PC-9 (cell line): ENCODE measurements at regions of chr12 and their contacts with region 1.

Region 1: DNA sequence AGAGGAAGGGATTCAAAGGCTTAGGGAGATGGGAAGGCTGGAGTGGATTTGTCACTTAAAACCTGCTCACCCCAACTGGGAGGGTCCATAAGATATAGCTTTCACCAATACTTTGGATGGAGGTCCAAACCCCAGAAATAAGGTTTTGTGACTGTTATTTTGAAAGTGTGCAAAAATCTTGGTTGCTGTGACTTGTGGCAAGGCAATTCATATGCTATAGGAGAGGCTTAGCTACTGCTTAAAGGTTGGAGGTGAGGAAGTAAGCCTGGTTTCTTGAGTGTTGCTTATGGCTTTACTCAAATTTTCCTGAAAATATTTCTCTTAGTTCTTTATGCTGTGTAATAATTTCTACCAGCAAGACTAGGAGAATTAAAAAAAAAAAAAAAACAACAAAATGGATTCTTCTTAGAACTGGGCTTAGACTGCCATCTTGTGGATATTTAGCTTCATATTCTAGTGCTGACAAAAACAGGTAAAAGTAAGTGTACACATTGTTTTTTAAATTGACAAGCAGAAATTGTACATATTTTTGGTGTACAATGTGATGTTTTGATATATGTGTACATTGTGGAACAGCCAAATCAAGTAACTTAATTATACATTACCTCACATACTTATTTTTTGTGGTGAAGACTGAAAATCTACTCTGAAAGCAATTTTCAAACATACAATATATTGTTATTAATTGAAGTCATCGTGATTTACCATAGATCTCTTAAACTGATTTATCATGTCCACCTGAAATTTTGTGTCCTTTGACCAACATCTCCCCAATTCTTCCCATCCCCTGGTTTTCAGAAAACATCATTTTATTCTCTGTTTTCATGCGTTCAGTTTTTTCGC is 23.0 kb downstream of the PDE6H start:
- DNase-seq: peak in 1 of 2 experiments; percentile 68
- H3K4me3 ChIP-seq: no peak overlapping the region
- H3K27ac ChIP-seq: no peak overlapping the region
- H3K4me1 ChIP-seq: peaks cover 17% of the 10 kb centered on the region
- H3K27me3 ChIP-seq: no peaks in the 10 kb centered on the region
- CTCF ChIP-seq: peak; percentile 85

Region 2: DNA sequence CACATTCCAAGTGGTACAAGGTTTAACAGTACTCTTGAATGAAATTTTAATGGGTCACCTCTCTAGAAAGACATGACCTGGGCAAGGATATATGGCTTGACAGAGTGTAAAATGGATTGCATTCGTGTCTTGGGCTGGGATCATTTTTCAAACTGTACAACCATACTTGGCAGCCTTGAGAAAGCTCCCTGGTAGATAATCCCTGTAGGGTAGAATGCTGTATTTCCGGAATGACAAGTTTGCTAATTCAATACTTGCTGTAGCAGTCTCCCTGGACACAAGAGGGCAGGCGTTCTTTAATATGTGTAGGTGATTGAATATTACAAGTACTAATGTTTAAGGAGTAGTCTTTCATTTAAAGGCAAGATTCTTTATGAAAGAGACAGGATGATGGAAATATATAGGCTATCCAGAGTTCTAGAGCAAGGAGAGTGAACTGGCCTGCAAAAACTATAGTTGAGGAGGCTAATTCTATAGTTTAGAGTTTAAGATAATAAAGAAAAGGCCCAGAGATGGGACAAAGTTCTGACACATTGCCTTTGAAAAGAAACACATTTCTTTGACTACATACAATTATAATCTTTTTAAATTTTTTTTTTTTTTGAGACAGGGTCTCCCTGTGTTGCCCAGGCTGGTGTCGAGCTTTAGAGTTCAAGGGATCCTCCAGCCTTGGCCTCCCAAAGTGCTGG is 481.5 kb before region 1 on chr12:
- CTCF ChIA-PET with region 1: no interaction called
- POLR2A ChIA-PET with region 1: interaction called, 5 read pairs
- intact Hi-C with region 1: loop called (anchors 10 kb)
- DNase-seq: peak; percentile 66 to 93
- H3K4me3 ChIP-seq: no peak overlapping the region
- H3K27ac ChIP-seq: no peak overlapping the region
- H3K4me1 ChIP-seq: peaks cover 18% of the 10 kb centered on the region
- H3K27me3 ChIP-seq: no peaks in the 10 kb centered on the region
- CTCF ChIP-seq: peak; percentile 79

Region 3: DNA sequence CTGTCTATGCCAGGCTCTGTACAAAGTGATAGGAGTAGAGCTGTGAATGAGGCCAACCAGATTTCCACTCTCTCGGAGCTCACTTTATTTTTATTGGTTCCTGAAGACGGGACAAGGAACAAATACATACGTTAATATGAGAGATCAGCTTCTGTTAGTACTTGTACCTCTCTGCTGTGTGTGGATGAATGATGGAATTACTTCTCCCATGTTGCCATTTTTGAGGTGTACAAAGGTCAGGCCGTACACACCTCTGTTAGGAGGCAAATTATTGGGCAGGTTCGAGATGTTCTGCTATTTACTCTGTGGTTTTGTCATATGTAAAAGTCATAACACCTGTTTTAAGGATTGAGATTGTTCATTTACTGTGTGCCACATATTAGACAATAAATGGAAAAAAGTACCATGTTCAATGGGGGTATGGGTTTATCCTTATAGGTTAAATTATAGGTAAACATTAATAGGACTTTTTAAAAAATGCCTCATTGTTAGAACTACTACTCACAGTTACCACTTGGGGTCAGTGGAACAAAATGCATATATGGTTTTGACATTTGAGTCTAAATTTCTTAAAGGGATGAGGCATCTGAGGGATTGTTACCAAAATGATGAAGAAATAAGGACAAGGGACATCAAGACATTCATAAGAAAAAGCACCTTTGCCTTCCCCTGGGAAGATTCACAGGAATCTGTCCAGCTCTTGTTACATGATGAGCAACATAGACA is 219.4 kb before region 1 on chr12:
- CTCF ChIA-PET with region 1: interaction called, 3 read pairs
- POLR2A ChIA-PET with region 1: no interaction called
- intact Hi-C with region 1: loop called (anchors 2 kb)
- DNase-seq: peak in 1 of 2 experiments; percentile 49
- H3K4me3 ChIP-seq: peak overlapping the region; percentile 91
- H3K27ac ChIP-seq: peak overlapping the region; percentile 89
- H3K4me1 ChIP-seq: peaks cover 41% of the 10 kb centered on the region
- H3K27me3 ChIP-seq: no peaks in the 10 kb centered on the region
- CTCF ChIP-seq: peak; percentile 46; the same call in 1 of the 2 replicates

Region 4: DNA sequence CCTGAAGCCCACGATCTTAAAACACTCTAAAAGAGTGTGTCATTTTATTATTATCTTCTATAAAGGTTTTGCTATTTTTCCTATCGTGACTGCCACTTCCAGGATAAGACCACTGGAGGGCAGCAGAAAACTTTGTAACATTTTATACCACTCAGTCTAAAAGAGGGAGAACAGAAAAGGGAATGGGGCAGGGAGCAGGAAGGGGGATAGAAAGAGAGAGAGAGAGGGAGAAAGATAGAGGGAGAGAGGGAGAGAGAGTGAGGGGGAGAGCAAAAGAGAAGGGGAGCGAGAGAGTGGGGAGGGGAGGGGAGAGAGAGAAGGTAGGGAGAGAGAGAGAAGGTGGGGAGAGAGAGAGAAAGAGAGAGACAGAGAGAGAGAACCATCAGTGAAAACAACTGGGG is 150.5 kb before region 1 on chr12:
- CTCF ChIA-PET with region 1: interaction called, 3 read pairs
- POLR2A ChIA-PET with region 1: no interaction called
- intact Hi-C with region 1: loop called (anchors 1 kb)
- DNase-seq: peak; percentile 40 to 52
- H3K4me3 ChIP-seq: no peak overlapping the region
- H3K27ac ChIP-seq: no peak overlapping the region
- H3K4me1 ChIP-seq: peaks cover 33% of the 10 kb centered on the region
- H3K27me3 ChIP-seq: no peaks in the 10 kb centered on the region
- CTCF ChIP-seq: peak; percentile 93

Region 5: GRCh38 chr12:14952299-14952921 is 43.4 kb before region 1 on chr12:
- CTCF ChIA-PET with region 1: interaction called, 3 read pairs
- POLR2A ChIA-PET with region 1: interaction called, 4 read pairs
- intact Hi-C with region 1: loop called (anchors 2 kb)
- DNase-seq: peak; percentile 64 to 98
- H3K4me3 ChIP-seq: 0 out of 2 replicates have a peak overlapping the region, but pooled peaks have one; percentile 0
- H3K27ac ChIP-seq: peak overlapping the region; percentile 83
- H3K4me1 ChIP-seq: peaks cover 72% of the 10 kb centered on the region
- H3K27me3 ChIP-seq: no peaks in the 10 kb centered on the region
- CTCF ChIP-seq: no peak

Region 6: DNA sequence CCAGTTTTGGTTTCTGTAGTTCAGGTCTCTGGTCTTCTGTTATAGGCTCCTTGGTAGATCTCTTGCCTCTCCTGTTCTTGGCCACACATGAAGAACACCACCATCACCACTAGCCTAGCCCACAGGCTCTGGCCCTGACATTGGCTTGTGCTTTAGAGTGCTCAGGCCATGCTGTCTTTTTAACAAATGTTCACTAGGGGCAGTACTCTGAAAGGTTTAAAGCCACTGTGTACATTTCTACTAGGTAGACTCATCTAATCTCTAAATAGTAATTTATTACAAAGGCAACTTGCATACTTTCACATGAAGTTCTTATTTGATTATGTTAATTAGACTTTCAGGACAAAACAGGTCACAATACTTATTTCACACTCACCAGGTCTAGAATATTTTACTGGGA is 15.4 kb after region 1 on chr12:
- CTCF ChIA-PET with region 1: no interaction called
- POLR2A ChIA-PET with region 1: no interaction called
- intact Hi-C with region 1: no loop called
- DNase-seq: no peak
- H3K4me3 ChIP-seq: no peak overlapping the region
- H3K27ac ChIP-seq: no peak overlapping the region
- H3K4me1 ChIP-seq: no peaks in the 10 kb centered on the region
- H3K27me3 ChIP-seq: no peaks in the 10 kb centered on the region
- CTCF ChIP-seq: peak; percentile 43; the same call in 1 of the 2 replicates

Region 7: DNA sequence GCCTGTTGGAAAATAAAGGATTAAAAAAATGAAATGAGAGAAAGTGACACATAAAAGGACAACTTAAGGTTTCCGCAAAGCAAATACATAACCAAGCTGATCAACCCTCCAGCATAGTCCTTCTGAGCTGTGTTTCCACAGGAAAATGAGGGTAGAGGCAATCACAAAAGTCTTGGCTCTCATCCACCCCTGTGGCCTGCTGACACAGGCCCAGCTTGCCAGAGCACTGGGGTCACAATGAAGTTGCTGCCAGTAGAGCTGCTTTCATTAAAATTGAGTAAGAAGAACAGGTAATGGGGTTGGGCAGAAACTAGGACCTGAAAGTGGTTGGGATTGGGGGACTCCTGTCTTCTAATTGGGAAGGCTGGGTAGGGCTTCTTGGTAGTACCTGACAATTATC is 159.5 kb after region 1 on chr12:
- CTCF ChIA-PET with region 1: no interaction called
- POLR2A ChIA-PET with region 1: no interaction called
- intact Hi-C with region 1: no loop called
- DNase-seq: no peak
- H3K4me3 ChIP-seq: no peak overlapping the region
- H3K27ac ChIP-seq: no peak overlapping the region
- H3K4me1 ChIP-seq: peaks cover 19% of the 10 kb centered on the region
- H3K27me3 ChIP-seq: no peaks in the 10 kb centered on the region
- CTCF ChIP-seq: no peak

Region 8: GRCh38 chr12:15268927-15269552 is 273.2 kb after region 1 on chr12:
- CTCF ChIA-PET with region 1: no interaction called
- POLR2A ChIA-PET with region 1: no interaction called
- intact Hi-C with region 1: loop called (anchors 1 kb)
- DNase-seq: peak; percentile 53 to 63
- H3K4me3 ChIP-seq: no peak overlapping the region
- H3K27ac ChIP-seq: no peak overlapping the region
- H3K4me1 ChIP-seq: 0 out of 2 replicates have a peak, but pooled peaks cover 2% of the 10 kb centered on the region
- H3K27me3 ChIP-seq: no peaks in the 10 kb centered on the region
- CTCF ChIP-seq: peak; percentile 92